Heart right ventricle (tissue), 16 donors: ENCODE measurements at regions of chr11 and their contacts with region 1.

Region 1: GRCh38 chr11:78645226-78646202 is 70.8 kb upstream of the NARS2 start:
- DNase-seq: peak; percentile 51 to 63
- ATAC-seq: peak; percentile 58 to 88 (median 80)
- H3K4me3 ChIP-seq: no peak overlapping the region
- H3K27ac ChIP-seq: no peak overlapping the region
- H3K4me1 ChIP-seq: peaks cover 0 to 3% (median 0%) of the 10 kb centered on the region in 9 donors
- H3K27me3 ChIP-seq: peaks cover 0 to 13% (median 0%) of the 10 kb centered on the region in 7 donors
- CTCF ChIP-seq: peak; percentile 86 to 96 (median 94)

Region 2: DNA sequence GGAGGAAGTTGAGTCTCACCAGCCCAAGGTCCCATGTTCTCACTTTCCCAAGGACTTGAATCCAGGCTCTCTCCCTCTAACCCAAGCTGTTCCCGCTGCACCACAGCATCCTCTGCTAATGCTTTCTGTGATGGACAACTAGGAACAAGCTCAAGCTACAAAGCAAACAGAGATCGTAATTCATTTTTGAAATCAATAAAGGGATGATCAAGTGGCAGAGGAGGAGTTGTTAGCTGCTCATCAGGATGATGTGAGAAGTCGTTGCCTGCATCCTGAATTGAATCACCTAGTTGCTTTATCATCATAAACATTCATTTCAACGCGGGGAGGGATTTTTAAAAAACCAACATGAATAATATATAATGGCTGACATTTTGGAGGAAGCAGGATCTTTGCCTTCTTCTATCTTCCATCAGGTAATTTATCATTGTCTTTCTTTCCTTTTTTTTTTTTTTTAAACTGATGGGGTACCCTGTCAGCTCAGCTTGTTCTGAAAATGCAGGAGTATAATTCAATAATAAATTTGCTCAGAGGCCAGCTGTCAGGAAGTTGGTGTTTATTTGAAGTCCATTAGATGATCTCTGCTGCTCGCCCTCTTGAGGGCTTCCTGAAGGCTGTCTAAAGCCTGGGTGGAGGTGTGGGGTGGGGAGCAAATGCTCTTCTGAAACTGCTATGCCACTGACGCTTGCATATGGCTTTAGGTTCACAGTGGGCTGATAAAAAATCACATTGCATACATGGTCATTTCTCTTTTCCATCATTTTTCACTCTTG is 103.6 kb after region 1 on chr11:
- intact Hi-C with region 1: no loop called
- DNase-seq: no peak
- ATAC-seq: no peak
- H3K4me3 ChIP-seq: no peak overlapping the region
- H3K27ac ChIP-seq: no peak overlapping the region
- H3K4me1 ChIP-seq: peaks cover 0 to 7% (median 0%) of the 10 kb centered on the region in 9 donors
- H3K27me3 ChIP-seq: peaks cover 0 to 5% (median 0%) of the 10 kb centered on the region in 7 donors
- CTCF ChIP-seq: no peak

Region 3: DNA sequence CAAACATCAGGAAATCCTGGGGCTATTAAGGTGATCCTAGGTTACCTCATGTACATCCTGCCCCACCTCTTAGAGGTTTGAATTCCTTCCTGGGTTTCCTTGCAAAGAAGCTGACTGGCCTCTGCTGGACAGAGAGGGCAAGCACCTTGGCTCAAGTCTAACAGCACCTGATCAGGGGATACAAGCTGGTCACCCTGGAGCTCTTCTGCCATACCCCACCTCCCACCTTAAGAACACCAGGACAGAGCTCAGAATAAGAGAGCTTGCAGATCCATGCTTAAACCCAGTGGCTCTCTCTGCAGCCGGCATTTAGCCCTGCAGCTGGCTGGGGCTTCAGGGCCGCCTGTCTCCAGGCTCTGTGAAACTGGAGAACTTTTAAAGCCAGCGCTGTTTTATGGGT is 315.7 kb after region 1 on chr11:
- intact Hi-C with region 1: loop called in 8 of 10 experiments (anchors 2 to 10 kb)
- DNase-seq: peak in 1 of 2 donors; percentile 17
- ATAC-seq: peak in 7 of 8 donors; percentile 43 to 78 (median 65)
- H3K4me3 ChIP-seq: no peak overlapping the region
- H3K27ac ChIP-seq: no peak overlapping the region
- H3K4me1 ChIP-seq: peaks cover 0 to 20% (median 5%) of the 10 kb centered on the region in 9 donors
- H3K27me3 ChIP-seq: peaks cover 0 to 58% (median 23%) of the 10 kb centered on the region in 7 donors
- CTCF ChIP-seq: peak in 7 of 9 donors; percentile 42 to 59 (median 51)

Region 4: GRCh38 chr11:79071190-79071589 is 425.7 kb after region 1 on chr11:
- intact Hi-C with region 1: loop called (anchors 1 to 10 kb)
- DNase-seq: no peak
- ATAC-seq: no peak
- H3K4me3 ChIP-seq: no peak overlapping the region
- H3K27ac ChIP-seq: no peak overlapping the region
- H3K4me1 ChIP-seq: no peaks in the 10 kb centered on the region
- H3K27me3 ChIP-seq: no peaks in the 10 kb centered on the region
- CTCF ChIP-seq: no peak

Region 5: GRCh38 chr11:79100093-79100910 is 454.8 kb after region 1 on chr11:
- intact Hi-C with region 1: loop called in 2 of 10 experiments (anchors 1 to 10 kb)
- DNase-seq: no peak
- ATAC-seq: peak in 2 of 8 donors; percentile 40 to 69
- H3K4me3 ChIP-seq: no peak overlapping the region
- H3K27ac ChIP-seq: no peak overlapping the region
- H3K4me1 ChIP-seq: peaks cover 0 to 11% (median 0%) of the 10 kb centered on the region in 9 donors
- H3K27me3 ChIP-seq: peaks cover 0 to 7% (median 0%) of the 10 kb centered on the region in 7 donors
- CTCF ChIP-seq: peak; percentile 27 to 71 (median 66)